ENCODE measurements at regions of chr12 and their contacts with region 1.

Region 1: DNA sequence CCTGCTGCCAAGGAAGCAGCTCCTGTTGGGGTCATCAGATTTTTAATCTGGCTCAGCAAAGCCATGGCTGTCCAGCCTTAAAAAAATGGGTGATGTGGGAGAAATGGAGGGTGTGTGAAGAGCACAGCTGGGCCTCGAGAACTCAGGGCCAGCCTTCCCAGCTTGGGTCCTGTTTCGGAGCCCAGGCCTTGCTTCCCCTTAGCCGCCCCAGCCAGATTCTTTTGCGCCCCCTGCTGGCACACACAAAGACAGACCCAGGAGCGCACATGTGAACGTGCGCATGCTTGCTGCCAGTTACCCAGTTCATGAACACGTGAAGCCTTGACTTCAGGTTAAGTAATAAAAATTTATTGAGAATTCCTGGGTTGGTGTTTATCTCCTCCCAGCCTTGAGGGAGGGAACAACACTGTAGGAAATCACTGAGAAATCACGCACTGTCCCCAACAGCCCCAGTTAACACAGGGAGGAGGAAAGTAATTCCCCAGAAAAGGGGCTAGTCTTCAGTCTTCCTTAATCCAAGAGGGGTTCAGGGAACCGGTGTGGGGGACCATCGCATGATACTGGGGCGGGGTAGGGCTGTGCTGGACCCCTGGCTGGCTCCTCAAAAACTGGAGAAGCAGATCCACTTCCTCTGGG is 5.3 kb downstream of the PHB2 start:
- DNase-seq: peak; percentile 59 to 86 (median 82)
- H3K4me3 ChIP-seq: peak overlapping the region in 5 of 59 donors; percentile 0 to 21 (median 11)
- H3K27ac ChIP-seq: peak overlapping the region in 52 of 59 donors; percentile 20 to 89 (median 70)
- H3K27me3 ChIP-seq: no peaks in the 10 kb centered on the region
- CTCF ChIP-seq: peak; percentile 64 to 96 (median 92)

Region 2: DNA sequence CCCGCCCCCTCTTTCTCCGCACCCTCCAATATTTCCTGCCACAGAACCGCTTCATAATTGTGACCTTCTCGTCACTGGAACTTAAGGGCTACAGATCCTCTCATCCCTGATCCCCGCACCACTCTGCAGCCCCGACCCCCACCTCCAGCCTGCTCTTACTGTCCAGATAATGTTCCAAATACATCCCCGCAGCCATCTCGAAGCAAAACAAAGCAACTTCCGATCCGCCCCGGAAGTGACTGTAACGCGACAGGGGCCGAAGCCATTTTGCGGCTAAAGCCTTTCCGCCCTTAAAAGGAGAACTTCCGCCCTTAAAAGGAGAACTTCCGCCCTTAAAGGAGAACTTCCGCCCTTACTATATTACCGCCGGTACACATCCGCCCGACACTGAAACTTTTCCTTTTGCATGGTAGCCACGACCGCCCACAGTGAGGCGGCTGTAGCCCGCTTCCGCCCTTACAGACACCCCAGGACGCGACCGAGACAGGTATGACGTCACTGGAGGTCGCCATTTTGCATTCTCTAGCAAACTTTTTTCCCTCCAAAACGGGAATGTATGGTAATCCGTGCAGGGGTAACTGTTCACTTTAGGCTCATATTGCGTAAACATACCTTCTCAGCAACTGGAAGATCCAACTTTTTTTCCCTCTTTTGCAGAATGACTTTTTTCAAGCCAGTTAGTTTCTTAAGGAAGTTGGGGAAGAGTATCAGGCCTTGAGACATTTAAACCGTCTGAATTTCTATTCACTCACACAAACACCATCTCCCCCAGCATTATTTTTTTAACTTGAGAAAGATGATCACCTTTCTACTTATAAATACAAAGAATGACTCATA is 302.0 kb before region 1 on chr12 and contains the start of gene ING4:
- intact Hi-C with region 1: loop called in 1 of 2 experiments (anchors 5 kb)
- DNase-seq: peak; percentile 96 to 100 (median 99)
- H3K4me3 ChIP-seq: peak within 1 kb of the TSS; percentile 58 to 95 (median 80)
- H3K27ac ChIP-seq: peak within 1 kb of the TSS in 58 of 59 donors; percentile 25 to 96 (median 82)
- H3K27me3 ChIP-seq: no peaks in the 10 kb centered on the region
- CTCF ChIP-seq: peak in 18 of 56 donors; percentile 3 to 51 (median 14)
- total RNA-seq, gene ING4: 45.0 to 72.1 (median 59.4) TPM

Region 3: GRCh38 chr12:6867413-6868210 is 97.5 kb before region 1 on chr12 and contains the start of gene TPI1:
- intact Hi-C with region 1: loop called in 1 of 2 experiments (anchors 2 kb)
- DNase-seq: peak; percentile 74 to 92 (median 90)
- H3K4me3 ChIP-seq: peak within 1 kb of the TSS; percentile 53 to 100 (median 97)
- H3K27ac ChIP-seq: peak within 1 kb of the TSS; percentile 74 to 100 (median 98)
- H3K27me3 ChIP-seq: no peaks in the 10 kb centered on the region
- CTCF ChIP-seq: peak in 37 of 56 donors; percentile 4 to 58 (median 26)
- total RNA-seq, gene TPI1: 261 to 851 (median 575) TPM

Region 4: DNA sequence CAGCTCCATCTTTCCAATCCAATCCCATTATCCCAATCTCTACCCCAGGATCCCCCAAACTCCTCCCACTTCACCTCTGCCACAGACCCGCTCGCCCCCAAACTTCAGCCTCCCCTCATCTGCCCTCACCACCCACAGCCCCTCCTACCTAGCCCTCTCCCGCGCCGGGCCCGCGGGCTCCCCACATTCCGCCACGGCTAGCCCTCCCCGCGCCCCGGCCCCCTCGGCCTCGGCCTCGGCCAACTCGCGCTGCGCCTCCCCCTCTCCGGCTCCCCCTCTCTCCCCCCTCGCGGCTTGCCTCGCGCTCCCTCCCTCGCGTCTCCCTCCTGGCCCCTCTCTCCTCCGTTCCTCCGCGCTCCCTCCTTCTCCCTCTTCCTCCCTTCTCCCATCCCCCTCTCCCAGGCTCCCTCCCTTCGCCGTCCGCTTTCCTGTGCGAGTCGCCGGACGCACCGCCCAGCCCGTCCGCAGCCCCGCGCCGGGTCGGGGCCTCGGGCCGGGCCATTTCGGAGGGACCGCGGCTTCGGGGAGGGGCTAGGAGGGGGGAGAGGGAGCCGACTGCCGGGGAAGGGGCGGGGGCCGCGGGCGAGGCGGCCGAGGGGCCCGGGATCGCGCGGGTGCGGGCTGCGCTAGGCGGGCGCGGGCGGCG is 37.6 kb before region 1 on chr12 and contains the start of gene ATN1:
- intact Hi-C with region 1: loop called (anchors 1 to 2 kb)
- DNase-seq: peak in 9 of 10 donors; percentile 55 to 86 (median 79)
- H3K4me3 ChIP-seq: peak within 1 kb of the TSS; percentile 58 to 89 (median 78)
- H3K27ac ChIP-seq: peak within 1 kb of the TSS; percentile 82 to 98 (median 95)
- H3K27me3 ChIP-seq: no peaks in the 10 kb centered on the region
- CTCF ChIP-seq: peak in 1 of 56 donors; percentile 24
- total RNA-seq, gene ATN1: 147 to 334 (median 199) TPM

Region 5: GRCh38 chr12:6937481-6938297 is 27.5 kb before region 1 on chr12:
- intact Hi-C with region 1: loop called in 1 of 2 experiments (anchors 5 kb)
- DNase-seq: peak; percentile 84 to 96 (median 94)
- H3K4me3 ChIP-seq: peak overlapping the region; percentile 59 to 95 (median 82)
- H3K27ac ChIP-seq: peak overlapping the region; percentile 83 to 100 (median 99)
- H3K27me3 ChIP-seq: no peaks in the 10 kb centered on the region
- CTCF ChIP-seq: peak; percentile 93 to 99 (median 98)

Region 6: GRCh38 chr12:6944381-6945186 is 20.6 kb before region 1 on chr12:
- intact Hi-C with region 1: loop called (anchors 2 kb)
- DNase-seq: peak; percentile 86 to 96 (median 94)
- H3K4me3 ChIP-seq: peak overlapping the region; percentile 60 to 95 (median 82)
- H3K27ac ChIP-seq: peak overlapping the region; percentile 86 to 100 (median 98)
- H3K27me3 ChIP-seq: no peaks in the 10 kb centered on the region
- CTCF ChIP-seq: peak; percentile 56 to 98 (median 92)

Region 7: GRCh38 chr12:7018350-7019042 is 53.4 kb after region 1 on chr12 and contains the start of gene LPCAT3:
- intact Hi-C with region 1: loop called (anchors 1 to 2 kb)
- DNase-seq: peak; percentile 96 to 99 (median 98)
- H3K4me3 ChIP-seq: peak within 1 kb of the TSS; percentile 68 to 97 (median 89)
- H3K27ac ChIP-seq: peak within 1 kb of the TSS; percentile 63 to 98 (median 91)
- H3K27me3 ChIP-seq: no peaks in the 10 kb centered on the region
- CTCF ChIP-seq: peak; percentile 69 to 97 (median 88)
- total RNA-seq, gene LPCAT3: 10.6 to 35.2 (median 20.4) TPM

Measured in dorsolateral prefrontal cortex (tissue), 120 donors.